Aorta (tissue), 5 donors: ENCODE measurements at regions of chr2 and their contacts with region 1.

Region 1: GRCh38 chr2:179218848-179219594 is 45.6 kb downstream of the SESTD1 start:
- DNase-seq: peak; percentile 75 to 77
- ATAC-seq: peak; percentile 91
- H3K4me3 ChIP-seq: no peak overlapping the region
- H3K27ac ChIP-seq: no peak overlapping the region
- H3K4me1 ChIP-seq: peaks cover 0 to 3% of the 10 kb centered on the region in 2 donors
- H3K27me3 ChIP-seq: no peaks in the 10 kb centered on the region

Region 2: GRCh38 chr2:178978667-178979066 is 240.4 kb before region 1 on chr2:
- intact Hi-C with region 1: no loop called
- DNase-seq: no peak
- ATAC-seq: no peak
- H3K4me3 ChIP-seq: no peak overlapping the region
- H3K27ac ChIP-seq: no peak overlapping the region
- H3K4me1 ChIP-seq: no peaks in the 10 kb centered on the region
- H3K27me3 ChIP-seq: no peaks in the 10 kb centered on the region

Region 3: GRCh38 chr2:179253226-179253625 is 34.2 kb after region 1 on chr2:
- intact Hi-C with region 1: no loop called
- DNase-seq: no peak
- ATAC-seq: no peak
- H3K4me3 ChIP-seq: no peak overlapping the region
- H3K27ac ChIP-seq: no peak overlapping the region
- H3K4me1 ChIP-seq: peaks cover 2 to 7% of the 10 kb centered on the region in 2 donors
- H3K27me3 ChIP-seq: no peaks in the 10 kb centered on the region

Region 4: DNA sequence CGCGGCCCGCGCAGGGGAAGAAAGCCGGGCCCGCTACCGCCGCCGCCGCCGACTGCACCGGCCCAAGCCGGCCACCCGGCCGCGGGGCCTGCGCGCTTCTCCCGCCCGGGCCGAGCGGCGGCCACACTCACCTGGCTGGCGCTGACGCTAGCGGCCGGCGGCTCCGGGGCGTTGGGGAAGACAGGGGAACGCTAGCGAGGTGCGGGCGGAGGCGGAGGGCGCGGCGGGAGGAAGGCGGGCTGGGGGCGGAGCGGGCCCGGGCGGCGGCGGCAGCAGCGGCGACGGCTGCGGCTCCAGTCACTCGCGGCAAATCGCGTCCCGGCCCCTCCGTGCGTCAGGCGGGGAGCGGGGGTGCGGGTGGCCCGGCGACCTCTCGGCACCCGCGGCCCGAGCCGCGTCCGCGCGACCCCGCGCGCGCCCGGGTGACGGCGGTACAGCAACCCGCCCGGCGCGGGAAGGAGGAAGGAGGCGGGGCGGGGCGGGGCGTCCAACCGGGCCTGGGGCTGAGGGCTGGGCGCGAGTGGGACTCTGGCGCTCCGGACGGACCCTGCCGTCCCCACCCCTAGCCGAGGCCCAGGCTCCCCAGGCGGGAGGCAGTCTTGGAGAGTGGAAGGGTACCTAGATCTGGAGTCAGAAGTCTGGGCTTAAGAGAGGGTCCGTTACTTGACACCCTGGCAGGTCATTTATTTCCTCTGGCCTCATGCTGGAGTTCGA is 45.5 kb after region 1 on chr2 and contains the start of gene SESTD1:
- intact Hi-C with region 1: loop called in 1 of 2 experiments (anchors 1 kb)
- DNase-seq: peak; percentile 88 to 93
- ATAC-seq: peak; percentile 91
- H3K4me3 ChIP-seq: peak within 1 kb of the TSS; percentile 99 to 100
- H3K27ac ChIP-seq: peak within 1 kb of the TSS; percentile 95 to 96
- H3K4me1 ChIP-seq: peaks cover 1 to 8% of the 10 kb centered on the region in 2 donors
- H3K27me3 ChIP-seq: no peaks in the 10 kb centered on the region
- total RNA-seq, gene SESTD1: 157 to 159 TPM

Region 5: DNA sequence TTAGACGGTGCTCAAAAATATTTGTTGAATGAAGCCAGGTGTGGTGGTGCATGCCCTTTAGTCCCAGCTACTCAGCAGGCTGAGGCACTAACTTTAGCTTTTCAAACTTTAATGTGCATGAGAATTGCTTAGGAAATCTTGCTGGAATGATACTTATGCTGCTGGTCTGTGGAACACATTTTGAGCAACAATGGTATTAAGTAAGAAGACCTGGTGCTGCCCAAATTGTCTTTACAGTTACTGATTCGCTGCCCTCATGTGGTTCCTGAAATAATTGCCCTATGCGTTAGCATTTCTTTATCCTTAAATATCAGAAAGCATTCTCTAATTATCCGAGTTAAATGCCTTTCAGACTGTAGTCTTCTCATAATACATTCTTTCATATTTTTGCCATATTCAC is 121.6 kb after region 1 on chr2:
- intact Hi-C with region 1: loop called (anchors 5 to 10 kb)
- DNase-seq: no peak
- ATAC-seq: no peak
- H3K4me3 ChIP-seq: no peak overlapping the region
- H3K27ac ChIP-seq: no peak overlapping the region
- H3K4me1 ChIP-seq: peaks cover 3 to 13% of the 10 kb centered on the region in 2 donors
- H3K27me3 ChIP-seq: no peaks in the 10 kb centered on the region

Region 6: DNA sequence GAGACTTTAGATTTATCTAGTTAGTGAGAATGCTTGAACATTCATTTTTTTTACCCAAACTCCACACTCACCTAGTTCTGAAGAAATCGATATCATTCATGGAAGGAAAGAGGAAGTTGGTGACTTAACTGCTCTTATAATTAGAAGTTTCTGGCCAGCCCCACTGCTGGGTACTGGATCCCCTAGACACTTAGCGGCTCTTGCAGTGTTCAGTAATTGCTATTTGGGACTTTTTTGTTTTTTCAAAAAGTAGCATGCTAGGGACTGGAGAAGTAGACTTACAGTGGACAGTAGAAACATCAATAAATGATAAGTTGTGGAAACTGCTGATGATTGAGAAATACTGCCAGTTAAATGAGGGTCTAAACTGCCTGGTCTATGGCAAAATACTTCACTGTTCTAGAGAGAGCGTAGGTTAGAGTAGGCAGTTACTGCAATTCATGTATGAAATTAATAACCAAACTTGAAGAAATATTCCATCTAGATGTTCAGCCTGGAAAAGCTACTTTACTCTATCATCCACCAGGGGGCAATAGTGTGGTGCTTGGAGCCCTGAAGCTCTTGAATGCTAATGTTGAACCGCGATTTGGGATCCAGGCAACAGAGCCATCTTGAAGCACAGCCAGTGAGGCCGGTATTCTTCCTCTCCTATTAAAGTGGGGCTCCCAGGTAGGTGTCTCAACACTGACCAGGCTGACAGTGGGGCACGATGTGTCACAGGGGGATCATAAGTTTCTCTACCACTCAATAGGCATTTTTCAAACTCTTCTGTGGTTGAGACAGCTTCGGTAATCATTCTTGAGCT is 191.7 kb after region 1 on chr2:
- intact Hi-C with region 1: loop called in 1 of 2 experiments (anchors 10 kb)
- DNase-seq: no peak
- ATAC-seq: peak; percentile 77
- H3K4me3 ChIP-seq: no peak overlapping the region
- H3K27ac ChIP-seq: no peak overlapping the region
- H3K4me1 ChIP-seq: no peaks in the 10 kb centered on the region
- H3K27me3 ChIP-seq: no peaks in the 10 kb centered on the region

Region 7: GRCh38 chr2:179440642-179441251 is 221.7 kb after region 1 on chr2:
- intact Hi-C with region 1: loop called in 1 of 2 experiments (anchors 2 kb)
- DNase-seq: no peak
- ATAC-seq: peak; percentile 56
- H3K4me3 ChIP-seq: no peak overlapping the region
- H3K27ac ChIP-seq: no peak overlapping the region
- H3K4me1 ChIP-seq: no peaks in the 10 kb centered on the region
- H3K27me3 ChIP-seq: no peaks in the 10 kb centered on the region